Dorsolateral prefrontal cortex (tissue), 120 donors: ENCODE measurements at regions of chr3 and their contacts with region 1.

Region 1: DNA sequence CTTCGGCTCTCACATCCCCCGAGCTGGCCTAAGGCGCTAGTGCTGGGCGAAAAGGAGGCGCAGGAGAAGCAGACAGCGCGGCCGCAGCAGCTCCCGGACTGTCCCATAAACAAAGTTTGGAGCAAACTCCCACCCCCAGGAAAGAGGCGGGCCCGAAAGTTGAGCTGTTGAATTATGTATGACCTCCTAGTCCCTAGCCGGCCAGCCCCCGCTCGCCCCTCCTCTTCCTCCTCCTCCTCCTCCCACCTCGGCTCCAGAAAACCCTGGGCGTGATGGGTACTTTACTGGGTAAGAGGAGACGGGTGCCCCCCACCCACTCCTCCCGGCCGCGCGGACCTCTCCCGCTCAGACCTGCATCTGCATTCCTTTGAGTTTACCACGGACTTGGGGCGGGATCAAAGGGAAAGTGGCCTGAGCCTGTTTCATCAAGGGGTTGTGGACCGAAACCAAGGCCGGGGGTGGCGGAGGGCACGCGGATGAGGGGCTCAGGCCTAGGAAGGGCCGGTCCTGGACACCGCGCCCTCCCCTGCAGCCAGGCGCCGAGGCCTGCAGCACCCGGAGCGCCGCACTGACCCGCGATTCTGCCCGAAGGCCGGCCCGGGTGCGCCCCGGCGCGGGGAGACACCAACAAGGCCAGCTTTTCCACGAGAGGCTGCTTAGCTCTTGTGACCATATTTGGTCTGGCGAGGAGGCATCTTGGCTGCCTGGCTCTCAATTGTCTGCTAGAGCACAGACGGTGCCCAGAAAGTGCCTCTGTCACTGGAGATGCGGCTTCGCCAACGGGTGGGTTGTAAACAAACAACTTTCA is at the start of gene WWTR1:
- DNase-seq: peak; percentile 35 to 84 (median 75)
- H3K4me3 ChIP-seq: peak within 1 kb of the TSS; percentile 53 to 84 (median 69)
- H3K27ac ChIP-seq: peak within 1 kb of the TSS; percentile 46 to 95 (median 86)
- H3K27me3 ChIP-seq: peaks cover 0 to 14% (median 0%) of the 10 kb centered on the region in 45 donors
- CTCF ChIP-seq: peak in 46 of 56 donors; percentile 3 to 63 (median 38)
- total RNA-seq, gene WWTR1: 11.4 to 59.9 (median 24.1) TPM

Region 2: GRCh38 chr3:149536429-149536828 is 121.7 kb before region 1 on chr3:
- intact Hi-C with region 1: loop called (anchors 5 to 10 kb)
- DNase-seq: peak in 3 of 10 donors; percentile 37 to 52 (median 44)
- H3K4me3 ChIP-seq: peak overlapping the region in 1 of 59 donors; percentile 5
- H3K27ac ChIP-seq: no peak overlapping the region
- H3K27me3 ChIP-seq: no peaks in the 10 kb centered on the region
- CTCF ChIP-seq: no peak

Region 3: DNA sequence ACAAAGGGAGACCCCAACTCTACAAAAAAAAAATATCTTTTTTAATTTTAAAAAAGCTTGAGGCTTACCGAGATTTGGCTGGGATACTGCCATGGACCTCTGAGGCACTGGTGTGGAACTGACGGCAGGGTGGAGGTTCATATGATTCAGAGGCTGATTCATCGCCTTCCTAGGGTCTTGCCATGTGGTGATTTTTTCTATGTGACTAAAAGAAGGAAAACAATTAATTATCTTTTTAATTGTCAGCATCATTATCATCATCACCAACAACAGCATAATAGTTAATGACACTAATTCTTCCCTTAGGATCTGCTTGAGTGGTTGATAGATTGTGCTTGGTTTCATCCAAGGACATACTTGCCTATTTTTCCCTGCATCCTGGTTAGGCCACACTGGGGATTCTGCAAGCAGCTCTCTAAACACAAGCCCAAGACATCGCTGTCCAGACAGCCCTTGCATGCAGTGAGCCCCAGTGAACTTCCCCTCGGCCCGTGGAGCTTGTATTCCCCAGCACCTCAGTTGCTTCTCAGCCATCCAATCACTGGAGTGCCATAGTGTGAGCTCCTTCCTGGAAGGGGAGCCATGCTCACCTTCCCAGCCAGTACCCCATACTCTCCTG is 85.2 kb before region 1 on chr3:
- intact Hi-C with region 1: loop called in 1 of 2 experiments (anchors 5 kb)
- DNase-seq: no peak
- H3K4me3 ChIP-seq: no peak overlapping the region
- H3K27ac ChIP-seq: no peak overlapping the region
- H3K27me3 ChIP-seq: no peaks in the 10 kb centered on the region
- CTCF ChIP-seq: no peak

Region 4: GRCh38 chr3:149765762-149766334 is 107.7 kb after region 1 on chr3:
- intact Hi-C with region 1: no loop called
- DNase-seq: no peak
- H3K4me3 ChIP-seq: no peak overlapping the region
- H3K27ac ChIP-seq: peak overlapping the region in 56 of 59 donors; percentile 73 to 99 (median 94)
- H3K27me3 ChIP-seq: no peaks in the 10 kb centered on the region
- CTCF ChIP-seq: peak; percentile 68 to 96 (median 80)